BJ (cell line): ENCODE measurements at regions of chr2 and their contacts with region 1.

Region 1: GRCh38 chr2:71789556-71790204 is 336.3 kb downstream of the DYSF start:
- DNase-seq: no peak
- H3K4me3 ChIP-seq: no peak overlapping the region
- H3K27me3 ChIP-seq: peaks cover 1% of the 10 kb centered on the region
- CTCF ChIP-seq: peak; percentile 48

Region 2: DNA sequence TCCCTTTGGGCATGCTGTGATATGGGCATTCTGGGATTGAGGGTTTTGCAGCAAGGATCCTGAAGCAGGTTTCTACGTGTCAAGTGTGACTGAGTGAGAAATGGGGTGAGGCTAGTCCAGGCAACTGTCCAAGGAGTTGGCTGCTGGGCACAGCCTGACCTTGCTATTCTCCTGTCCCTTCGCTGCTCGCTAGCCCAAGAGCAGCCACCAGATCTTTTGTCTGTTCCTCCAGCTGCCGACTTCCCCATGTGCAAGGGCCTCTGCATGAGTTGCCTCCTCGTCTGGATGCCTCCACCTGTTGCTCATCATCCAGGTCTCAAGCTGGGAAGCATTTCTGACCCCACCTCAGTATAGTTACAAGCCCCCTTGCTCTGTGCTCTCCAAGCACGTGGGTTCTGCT is 265.2 kb before region 1 on chr2:
- CTCF ChIA-PET with region 1: no interaction called
- POLR2A ChIA-PET with region 1: no interaction called
- DNase-seq: no peak
- H3K4me3 ChIP-seq: no peak overlapping the region
- H3K27me3 ChIP-seq: peaks cover 12% of the 10 kb centered on the region
- CTCF ChIP-seq: no peak

Region 3: DNA sequence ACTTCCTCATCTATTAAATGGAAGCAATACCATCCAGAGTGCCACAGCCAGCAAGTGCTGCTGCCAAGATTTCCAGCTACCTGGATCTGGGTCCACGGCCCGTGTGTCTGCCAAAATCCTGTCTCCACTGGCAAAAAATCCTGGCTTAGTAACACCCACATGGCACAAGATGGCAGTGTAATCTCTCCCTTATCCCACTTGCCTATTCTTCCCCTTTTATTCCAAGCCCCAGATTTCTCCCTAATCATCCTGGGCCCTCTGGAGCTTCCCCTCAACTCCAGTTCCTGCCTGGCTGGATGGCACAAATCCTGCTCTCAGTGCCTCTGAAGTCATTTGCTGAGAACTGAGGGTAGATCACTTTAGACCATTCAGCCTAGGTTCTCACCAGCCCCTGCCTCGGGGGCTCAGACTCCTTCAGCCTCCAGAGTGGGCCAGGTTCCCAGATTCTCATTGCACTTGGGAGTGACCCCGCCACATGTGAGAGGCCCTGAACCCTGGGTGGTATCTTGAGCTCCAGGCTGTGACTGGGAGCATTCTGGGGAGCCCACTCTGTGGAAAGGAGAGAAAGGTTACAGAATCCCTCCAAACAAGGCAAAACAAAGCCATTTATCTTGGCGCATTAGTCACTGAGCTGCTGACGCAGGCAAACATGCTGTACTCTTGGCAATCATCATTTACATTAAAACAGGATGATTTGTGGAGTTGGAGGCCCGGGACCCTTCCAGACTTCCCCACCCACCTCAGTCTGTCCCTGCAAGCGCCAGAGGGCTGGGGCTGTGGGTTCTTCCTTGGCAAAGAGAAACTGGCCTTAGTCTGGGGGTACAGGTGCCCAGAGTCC is 10.5 kb before region 1 on chr2:
- CTCF ChIA-PET with region 1: interaction called, 13 read pairs
- POLR2A ChIA-PET with region 1: no interaction called
- DNase-seq: no peak
- H3K4me3 ChIP-seq: no peak overlapping the region
- H3K27me3 ChIP-seq: peaks cover 7% of the 10 kb centered on the region; the same call in 1 of the 2 replicates
- CTCF ChIP-seq: peak; percentile 37

Region 4: DNA sequence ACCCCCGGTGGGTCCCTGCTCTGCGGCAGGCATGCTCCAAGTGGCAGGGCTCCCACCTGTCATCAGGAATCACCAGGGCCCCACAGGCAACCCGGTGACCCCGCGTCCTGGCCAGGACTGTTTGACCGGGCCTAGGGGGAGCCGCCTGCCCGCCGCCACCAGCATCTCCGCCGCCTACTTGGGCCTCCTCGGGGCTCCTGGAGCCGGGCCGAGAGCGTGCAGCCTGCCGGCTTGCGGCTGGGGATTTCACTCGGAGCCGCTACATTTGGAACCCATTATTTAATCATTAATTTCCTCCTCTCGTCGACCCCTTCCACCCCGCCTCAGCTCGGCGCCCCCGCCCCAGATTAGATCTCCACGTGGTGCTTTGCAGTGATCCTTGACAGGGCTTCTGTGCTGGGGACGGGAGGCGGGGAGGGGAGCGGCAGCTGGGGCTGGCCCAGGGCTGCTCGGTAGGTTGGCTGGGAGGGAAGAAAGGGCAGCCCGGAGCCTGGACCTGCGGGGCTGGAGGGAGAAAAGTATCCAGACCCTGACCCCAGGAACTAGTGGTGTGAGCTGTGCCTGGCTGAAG is 62.5 kb after region 1 on chr2:
- CTCF ChIA-PET with region 1: no interaction called
- POLR2A ChIA-PET with region 1: no interaction called
- DNase-seq: no peak
- H3K4me3 ChIP-seq: no peak overlapping the region
- H3K27me3 ChIP-seq: peaks cover 12% of the 10 kb centered on the region
- CTCF ChIP-seq: no peak

Region 5: DNA sequence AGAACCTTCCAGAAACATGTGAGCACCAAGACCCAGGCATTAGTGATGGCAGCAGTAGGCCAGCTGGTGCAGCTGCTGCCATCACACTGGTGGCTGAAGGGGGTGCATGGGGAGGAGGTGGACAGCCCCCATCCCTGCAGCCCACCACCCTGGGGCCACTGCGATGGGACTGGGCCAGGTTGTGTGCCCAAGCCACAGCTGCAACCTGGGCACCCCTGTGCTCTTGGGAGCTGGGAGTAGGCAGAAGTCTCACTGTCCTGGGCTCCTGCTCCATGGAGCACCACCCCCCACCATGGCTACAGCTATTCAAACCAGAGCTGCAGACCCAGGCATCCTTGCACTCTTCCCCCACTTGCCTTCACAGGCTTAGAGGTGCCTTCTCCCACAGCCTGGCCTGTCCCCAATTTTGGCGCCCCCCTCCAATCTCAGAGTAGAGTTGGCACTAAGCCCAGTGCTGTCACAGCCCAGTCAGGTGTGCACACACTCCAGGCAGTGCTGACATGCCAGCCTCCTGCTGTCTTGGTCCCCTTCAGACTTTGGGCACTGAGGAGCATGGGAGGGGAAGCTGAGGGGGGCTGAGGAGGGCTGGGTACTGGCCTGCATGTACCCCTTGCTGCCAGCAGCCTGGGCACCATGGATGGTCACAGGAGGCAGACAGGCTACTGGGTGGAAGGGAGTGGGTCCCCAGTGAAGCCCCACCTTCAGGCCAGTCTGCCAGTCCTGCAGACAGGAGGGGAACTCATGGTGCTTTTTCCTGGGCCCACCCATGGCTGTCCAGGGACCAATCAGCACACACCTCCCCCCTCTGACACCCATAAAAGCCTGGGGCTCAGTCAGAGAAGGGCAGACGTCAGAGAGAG is 290.8 kb after region 1 on chr2:
- CTCF ChIA-PET with region 1: no interaction called
- POLR2A ChIA-PET with region 1: no interaction called
- DNase-seq: no peak
- H3K4me3 ChIP-seq: no peak overlapping the region
- H3K27me3 ChIP-seq: peaks cover 2% of the 10 kb centered on the region; the same call in 1 of the 2 replicates
- CTCF ChIP-seq: no peak